ENCODE measurements at regions of chrX and their contacts with region 1.

Region 1: GRCh38 chrX:9341291-9342201 is 123.3 kb upstream of the TBL1X start:
- DNase-seq: peak; percentile 59
- ATAC-seq: peak; percentile 47
- H3K4me3 ChIP-seq: peak overlapping the region; percentile 61
- H3K27ac ChIP-seq: peak overlapping the region; percentile 97
- H3K4me1 ChIP-seq: peaks cover 24% of the 10 kb centered on the region
- H3K27me3 ChIP-seq: no peaks in the 10 kb centered on the region
- CTCF ChIP-seq: peak; percentile 22; the same call in 1 of the 2 replicates

Region 2: GRCh38 chrX:9141496-9141895 is 200.1 kb before region 1 on chrX:
- CTCF ChIA-PET with region 1: no interaction called
- POLR2A ChIA-PET with region 1: no interaction called
- intact Hi-C with region 1: no loop called
- DNase-seq: no peak
- ATAC-seq: no peak
- H3K4me3 ChIP-seq: no peak overlapping the region
- H3K27ac ChIP-seq: no peak overlapping the region
- H3K4me1 ChIP-seq: no peaks in the 10 kb centered on the region
- H3K27me3 ChIP-seq: no peaks in the 10 kb centered on the region
- CTCF ChIP-seq: no peak

Region 3: DNA sequence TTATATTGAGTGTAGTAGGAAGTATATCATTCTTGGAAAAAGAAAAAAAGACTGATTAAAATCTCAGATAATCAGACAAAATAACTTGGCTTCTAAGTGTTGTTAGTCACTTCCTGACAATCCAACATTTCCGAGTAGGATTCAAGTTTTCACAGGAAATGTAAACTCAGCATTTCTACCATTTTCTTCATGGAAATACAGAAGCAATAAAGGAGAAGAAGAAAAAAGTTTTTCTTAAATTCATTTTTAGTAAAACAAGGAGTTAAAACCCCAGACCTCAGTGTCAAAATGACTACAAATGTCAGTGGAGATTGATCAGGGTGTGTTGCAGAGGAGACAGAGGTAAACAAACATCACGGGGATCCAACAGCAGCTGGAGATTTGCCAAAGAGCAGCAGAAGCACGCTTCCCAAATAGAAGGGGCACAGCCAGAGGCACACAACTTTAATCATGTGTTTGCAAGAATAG is 178.3 kb before region 1 on chrX:
- CTCF ChIA-PET with region 1: no interaction called
- POLR2A ChIA-PET with region 1: no interaction called
- intact Hi-C with region 1: loop called (anchors 2 kb)
- DNase-seq: peak; percentile 79
- ATAC-seq: peak; percentile 56
- H3K4me3 ChIP-seq: peak overlapping the region; percentile 28; the same call in 1 of the 2 replicates
- H3K27ac ChIP-seq: peak overlapping the region; percentile 98
- H3K4me1 ChIP-seq: peaks cover 55% of the 10 kb centered on the region
- H3K27me3 ChIP-seq: no peaks in the 10 kb centered on the region
- CTCF ChIP-seq: no peak

Region 4: DNA sequence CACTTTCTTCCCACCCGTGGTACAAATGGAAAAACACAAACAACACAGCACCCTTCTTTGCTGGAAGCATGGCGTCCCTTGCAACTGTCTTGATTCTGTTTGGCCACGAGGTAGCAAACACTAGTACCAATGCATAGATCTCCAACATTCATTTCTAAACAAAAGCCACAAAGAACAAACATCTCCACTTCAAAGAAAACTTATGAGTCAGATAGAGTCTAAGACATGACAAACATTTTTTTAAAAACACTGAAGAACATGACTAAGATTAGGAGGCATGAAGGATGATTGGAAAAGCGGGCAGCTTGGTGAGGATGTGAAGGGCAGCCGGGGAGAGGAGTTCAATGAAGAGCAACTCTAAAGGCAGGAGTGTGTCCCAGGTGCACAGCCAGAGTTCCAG is 110.1 kb before region 1 on chrX:
- CTCF ChIA-PET with region 1: interaction called, 11 read pairs
- POLR2A ChIA-PET with region 1: no interaction called
- intact Hi-C with region 1: loop called (anchors 5 kb)
- DNase-seq: peak; percentile 77
- ATAC-seq: peak; percentile 90
- H3K4me3 ChIP-seq: no peak overlapping the region
- H3K27ac ChIP-seq: peak overlapping the region; percentile 54
- H3K4me1 ChIP-seq: peaks cover 28% of the 10 kb centered on the region
- H3K27me3 ChIP-seq: no peaks in the 10 kb centered on the region
- CTCF ChIP-seq: no peak

Region 5: DNA sequence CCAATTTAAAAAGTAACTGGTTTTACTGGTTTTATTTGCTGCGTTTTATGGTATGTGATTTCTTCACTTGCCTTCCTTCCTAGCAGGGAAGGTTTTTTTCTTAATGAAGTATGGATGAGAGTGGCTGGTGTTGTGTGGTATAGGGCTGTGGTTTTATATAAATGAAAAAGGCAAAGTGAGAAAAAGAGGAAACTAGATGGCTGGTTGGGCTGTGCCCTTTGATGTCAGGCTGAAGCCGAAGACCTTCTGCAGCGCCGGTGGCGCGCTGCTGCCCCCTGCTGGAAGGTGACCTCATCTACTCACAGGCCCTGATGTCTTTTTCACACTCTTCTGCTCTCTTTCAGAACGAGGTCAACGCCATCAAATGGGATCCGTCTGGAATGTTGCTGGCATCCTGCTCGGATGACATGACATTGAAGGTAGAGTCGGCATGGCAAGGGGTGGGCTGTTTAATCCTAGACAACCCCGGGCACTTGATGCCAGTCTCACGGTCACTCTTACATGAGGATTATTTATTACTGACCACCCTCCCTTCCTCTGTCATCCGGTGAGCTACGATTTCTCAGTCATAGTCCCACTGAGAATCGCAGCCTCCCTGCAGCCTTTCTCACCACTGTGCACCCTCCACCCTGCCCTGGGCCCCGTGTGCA is 367.5 kb after region 1 on chrX:
- CTCF ChIA-PET with region 1: no interaction called
- POLR2A ChIA-PET with region 1: interaction called, 43 read pairs
- intact Hi-C with region 1: no loop called
- DNase-seq: peak; percentile 76
- ATAC-seq: peak; percentile 76
- H3K4me3 ChIP-seq: no peak overlapping the region
- H3K27ac ChIP-seq: 0 out of 2 replicates have a peak overlapping the region, but pooled peaks have one; percentile 20
- H3K4me1 ChIP-seq: peaks cover 11% of the 10 kb centered on the region
- H3K27me3 ChIP-seq: no peaks in the 10 kb centered on the region
- CTCF ChIP-seq: peak; percentile 85

Measured in PC-3 (cell line).